GM10248 (cell line): ENCODE measurements at regions of chr5 and their contacts with region 1.

Region 1: DNA sequence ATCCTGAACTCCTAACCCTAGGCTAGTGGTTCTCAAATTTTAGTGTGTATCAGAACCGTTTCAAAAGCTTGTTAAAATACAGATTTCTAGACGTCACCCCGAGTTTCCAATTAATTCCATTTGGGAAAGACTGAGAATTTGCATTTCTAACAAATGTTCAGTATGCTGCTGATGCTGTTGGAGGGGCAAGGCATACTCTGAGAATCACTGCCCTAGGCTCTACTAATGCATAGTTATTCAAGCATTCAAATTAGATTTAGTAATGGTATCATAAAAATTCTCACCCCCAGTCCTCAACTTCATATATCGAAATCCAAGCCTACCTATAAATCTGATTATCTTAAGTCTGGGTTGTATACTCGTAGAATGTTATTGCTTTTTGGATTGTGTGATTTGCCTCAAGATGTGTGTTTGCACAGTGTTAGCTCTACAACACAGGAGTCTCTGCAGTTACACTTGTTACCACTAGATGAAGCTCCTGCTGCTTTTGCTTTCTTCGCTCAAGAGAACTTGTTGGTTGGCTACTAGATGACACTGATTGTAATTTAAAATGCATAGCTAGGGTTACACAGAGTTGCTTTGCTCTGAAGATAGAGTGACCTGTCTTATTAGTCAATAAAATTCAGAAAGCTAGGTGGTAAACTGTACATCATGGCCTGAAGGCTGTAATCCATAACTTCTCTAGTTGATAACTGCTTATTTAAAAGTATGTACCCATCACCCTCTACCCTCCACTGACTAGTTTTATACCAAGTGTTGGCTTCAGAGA is 7.5 kb upstream of the ERAP2 start:
- DNase-seq: peak; percentile 53
- CTCF ChIP-seq: peak; percentile 94

Region 2: GRCh38 chr5:95530416-95530815 is 1338.4 kb before region 1 on chr5:
- CTCF ChIA-PET with region 1: no interaction called
- POLR2A ChIA-PET with region 1: no interaction called
- DNase-seq: no peak
- CTCF ChIP-seq: no peak

Region 3: DNA sequence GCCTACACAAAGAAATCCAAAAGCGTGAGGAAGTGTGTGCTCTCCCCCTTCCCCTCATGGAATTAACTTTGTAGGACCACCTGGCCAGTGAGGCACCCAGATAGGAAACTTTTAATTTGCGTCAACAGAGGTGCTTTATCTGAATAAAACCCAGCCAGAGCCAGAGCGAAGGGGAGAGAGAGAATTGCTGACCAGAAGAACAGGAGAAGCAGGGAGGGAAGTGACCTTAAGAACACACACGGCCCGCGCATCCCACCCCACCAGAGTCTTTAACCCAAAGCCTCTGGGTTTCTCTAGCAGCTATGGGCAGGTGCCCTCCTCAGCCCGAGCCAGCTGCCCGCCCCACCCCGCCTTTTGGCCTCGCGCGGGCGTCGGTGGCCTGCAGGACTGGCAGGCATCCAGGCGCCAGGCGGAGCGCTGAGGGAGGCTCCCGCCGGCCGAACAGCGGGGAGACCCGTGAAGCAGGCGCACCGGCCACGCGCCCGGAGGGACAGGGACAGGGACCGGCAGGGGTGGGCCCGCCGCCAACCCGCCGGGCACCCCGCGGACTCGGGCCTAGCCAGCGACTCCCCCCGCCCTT is 61.6 kb before region 1 on chr5:
- CTCF ChIA-PET with region 1: interaction called, 16 read pairs
- POLR2A ChIA-PET with region 1: no interaction called
- DNase-seq: peak; percentile 66
- CTCF ChIP-seq: no peak

Region 4: DNA sequence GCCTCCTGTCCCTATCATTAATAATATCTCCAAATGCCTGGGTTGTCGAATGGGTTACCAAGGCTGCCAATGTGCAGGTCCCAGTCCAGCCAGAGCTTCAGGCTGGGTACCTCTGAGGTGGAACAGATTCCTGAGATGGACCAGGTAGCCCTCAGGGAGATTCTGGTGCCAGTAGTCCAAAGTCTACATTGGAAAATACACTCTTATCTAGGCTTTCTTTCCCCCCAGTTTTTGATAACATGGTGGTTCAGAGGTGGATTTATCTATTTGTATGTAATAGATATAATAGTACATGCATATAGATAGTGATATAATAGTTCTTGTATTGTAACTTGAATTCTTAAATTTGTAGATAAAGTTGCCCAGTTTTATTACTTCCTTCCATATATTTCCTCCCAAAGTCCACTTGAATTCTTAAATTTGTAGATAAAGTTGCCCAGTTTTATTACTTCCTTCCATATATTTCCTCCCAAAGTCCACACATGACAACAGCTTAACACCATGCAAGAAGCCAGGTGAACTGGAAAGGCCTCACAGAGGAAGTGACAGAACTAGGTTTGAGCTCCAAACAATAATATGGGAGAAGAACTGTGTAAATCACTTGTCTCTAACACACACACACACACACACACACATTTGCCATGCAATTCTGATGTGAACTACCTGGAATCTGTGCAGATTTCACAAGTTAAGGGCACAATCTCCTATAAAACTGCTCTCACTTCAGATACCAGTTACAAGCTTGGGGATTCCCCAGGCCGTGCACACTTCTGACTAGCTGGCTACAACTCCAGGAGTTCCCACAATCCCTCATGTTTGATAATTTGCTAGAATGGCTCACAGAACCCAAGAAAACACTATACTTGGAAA is 30.4 kb before region 1 on chr5:
- CTCF ChIA-PET with region 1: interaction called, 12 read pairs
- POLR2A ChIA-PET with region 1: no interaction called
- DNase-seq: no peak
- CTCF ChIP-seq: no peak

Region 5: GRCh38 chr5:96896806-96897205 is 28.0 kb after region 1 on chr5:
- CTCF ChIA-PET with region 1: interaction called, 25 read pairs
- POLR2A ChIA-PET with region 1: no interaction called
- DNase-seq: peak; percentile 59
- CTCF ChIP-seq: peak; percentile 1

Region 6: GRCh38 chr5:96936431-96937320 is 67.9 kb after region 1 on chr5:
- CTCF ChIA-PET with region 1: interaction called, 13 read pairs
- POLR2A ChIA-PET with region 1: no interaction called
- DNase-seq: peak; percentile 49
- CTCF ChIP-seq: no peak

Region 7: GRCh38 chr5:96997265-96997859 is 128.6 kb after region 1 on chr5:
- CTCF ChIA-PET with region 1: interaction called, 13 read pairs
- POLR2A ChIA-PET with region 1: no interaction called
- DNase-seq: peak; percentile 13
- CTCF ChIP-seq: peak; percentile 26

Region 8: DNA sequence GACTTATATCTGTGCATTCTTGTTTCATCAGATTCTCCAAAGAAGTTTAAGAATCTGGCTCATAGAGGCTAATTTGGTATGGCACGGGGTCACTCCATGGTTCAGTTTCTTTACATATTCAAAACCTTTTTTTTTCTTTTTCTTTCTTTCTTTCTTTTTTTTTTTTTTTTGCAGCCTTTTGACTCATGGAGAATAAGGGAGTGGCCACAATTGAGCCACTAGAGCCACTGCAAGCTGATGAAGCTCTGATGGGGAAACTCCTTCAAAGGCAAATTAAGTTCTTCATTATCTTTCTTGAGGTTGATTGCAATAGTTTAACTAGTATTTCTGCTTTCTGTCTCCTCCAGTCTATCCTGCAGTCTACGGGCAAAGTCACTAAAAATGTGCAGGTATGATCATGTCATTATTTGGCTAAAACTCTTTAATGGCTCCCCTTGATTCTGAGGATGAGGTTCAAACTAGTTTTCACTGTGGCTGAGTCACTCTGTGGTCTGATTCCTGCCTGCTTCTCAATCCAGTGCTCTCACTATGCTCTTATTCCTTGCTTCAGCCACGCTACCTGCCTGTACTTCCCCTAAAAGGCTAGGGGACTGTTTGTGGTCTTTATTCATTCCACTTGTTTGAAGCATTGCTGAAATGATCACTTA is 407.8 kb after region 1 on chr5:
- CTCF ChIA-PET with region 1: no interaction called
- POLR2A ChIA-PET with region 1: no interaction called
- DNase-seq: no peak
- CTCF ChIP-seq: no peak